ENCODE measurements at regions of chr2 and their contacts with region 1.

Region 1: GRCh38 chr2:105712981-105713596 is 31.6 kb upstream of the NCK2 start:
- DNase-seq: peak; percentile 80
- ATAC-seq: peak; percentile 77
- H3K4me3 ChIP-seq: peak overlapping the region; percentile 42
- H3K27ac ChIP-seq: peak overlapping the region; percentile 77
- H3K4me1 ChIP-seq: peaks cover 40% of the 10 kb centered on the region
- H3K27me3 ChIP-seq: no peaks in the 10 kb centered on the region
- CTCF ChIP-seq: no peak

Region 2: DNA sequence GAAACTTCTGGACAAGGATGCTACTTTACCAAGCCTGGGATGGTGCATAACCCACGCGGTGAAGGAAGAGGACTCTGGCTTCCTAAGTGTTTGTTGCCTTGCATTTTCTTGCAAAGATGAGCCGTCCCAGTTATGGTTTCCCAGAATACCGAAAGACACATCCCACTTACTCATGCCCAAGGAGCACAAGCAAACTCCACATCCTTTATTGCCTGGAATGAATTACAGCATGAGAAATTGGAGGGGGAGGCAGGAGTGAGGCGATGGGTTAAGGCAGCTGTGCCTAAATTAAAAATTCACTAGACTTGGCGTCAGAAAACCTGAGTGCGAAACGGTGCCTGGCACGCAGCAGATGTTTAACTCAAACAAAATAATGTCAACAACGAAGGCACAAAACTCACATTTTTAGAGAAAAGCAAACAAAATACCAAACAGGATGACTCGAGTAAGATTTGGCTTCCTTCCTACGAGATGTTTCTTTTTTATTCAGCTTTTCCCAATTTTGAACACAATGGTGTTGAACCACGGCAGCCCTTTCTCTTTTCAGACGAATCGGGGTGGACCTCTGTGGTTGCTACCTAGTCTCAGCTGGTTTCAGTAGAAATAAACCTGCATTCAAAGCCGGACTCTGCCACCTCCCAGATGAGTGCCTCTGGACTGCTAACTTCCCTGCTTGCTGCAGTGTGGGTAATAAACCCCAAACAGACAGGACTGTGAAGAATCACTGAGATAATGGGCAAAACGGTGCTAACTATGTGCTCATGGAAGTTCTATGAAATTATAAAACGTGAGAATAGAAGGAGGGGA is 68.7 kb before region 1 on chr2:
- CTCF ChIA-PET with region 1: no interaction called
- POLR2A ChIA-PET with region 1: no interaction called
- intact Hi-C with region 1: loop called (anchors 2 kb)
- DNase-seq: peak; percentile 55
- ATAC-seq: peak; percentile 78
- H3K4me3 ChIP-seq: peak overlapping the region; percentile 59
- H3K27ac ChIP-seq: peak overlapping the region; percentile 27
- H3K4me1 ChIP-seq: peaks cover 35% of the 10 kb centered on the region
- H3K27me3 ChIP-seq: no peaks in the 10 kb centered on the region
- CTCF ChIP-seq: no peak